ENCODE measurements at regions of chr15 and their contacts with region 1.

Region 1: DNA sequence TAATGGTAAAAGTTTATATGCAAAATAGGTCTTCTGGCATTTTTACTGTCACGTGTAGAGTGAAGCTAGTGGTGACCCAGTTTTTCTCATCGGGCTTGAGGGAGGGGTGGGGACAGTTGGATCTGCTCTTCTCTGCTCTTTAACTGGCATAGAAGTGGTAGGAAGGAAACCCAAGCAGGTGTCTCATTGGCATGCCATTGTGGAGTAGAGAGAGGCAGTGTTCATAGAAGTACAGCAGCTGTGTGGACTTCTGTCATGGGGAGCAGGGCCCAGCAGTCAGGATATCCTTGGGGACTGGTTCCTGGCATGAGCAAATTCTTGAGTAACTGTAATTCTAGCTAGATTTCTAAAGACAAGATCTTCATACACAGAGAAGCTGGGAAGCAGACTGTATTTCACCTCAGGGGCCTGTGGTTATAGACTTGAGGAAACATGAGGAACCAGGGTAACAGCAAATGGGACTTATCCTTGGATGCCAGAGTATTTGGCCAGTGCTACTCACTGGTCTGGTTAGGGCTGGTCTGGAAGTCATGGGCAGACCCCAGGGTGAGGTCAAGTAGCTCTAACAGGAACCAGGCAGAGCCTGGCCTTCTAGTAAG is 42.9 kb downstream of the CDIN1 start:
- DNase-seq: no peak
- CTCF ChIP-seq: no peak

Region 2: DNA sequence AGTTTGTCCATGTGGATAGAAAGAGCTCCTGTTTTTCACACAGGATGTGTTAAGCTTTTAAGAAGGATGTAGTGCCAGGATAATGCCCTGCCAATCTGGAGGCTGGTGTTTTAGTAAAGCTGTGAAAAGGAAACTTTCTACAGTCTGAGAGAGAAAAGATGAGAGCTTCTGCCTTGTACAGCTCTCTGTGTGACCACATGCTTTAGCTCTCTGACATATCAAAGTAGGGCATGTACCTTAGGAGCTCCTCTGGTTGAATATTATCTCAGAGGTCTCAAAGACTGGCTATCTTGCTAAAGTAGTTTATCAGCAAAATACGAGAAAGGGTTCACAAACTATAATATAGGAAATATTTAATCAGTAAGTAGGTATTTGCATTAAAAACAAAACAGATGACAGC is 12.5 kb before region 1 on chr15:
- CTCF ChIA-PET with region 1: interaction called, 10 read pairs
- POLR2A ChIA-PET with region 1: no interaction called
- DNase-seq: no peak
- CTCF ChIP-seq: no peak